MCF 10A (cell line): ENCODE measurements at regions of chr1 and their contacts with region 1.

Region 1: GRCh38 chr1:186985889-186986491 is 157.2 kb downstream of the PLA2G4A start:
- DNase-seq: peak; percentile 80
- H3K4me3 Mint-ChIP-seq: no peak overlapping the region
- H3K27ac Mint-ChIP-seq: no peak overlapping the region
- H3K4me1 Mint-ChIP-seq: no peaks in the 10 kb centered on the region
- H3K27me3 Mint-ChIP-seq: no peaks in the 10 kb centered on the region
- CTCF ChIP-seq: peak; percentile 90

Region 2: DNA sequence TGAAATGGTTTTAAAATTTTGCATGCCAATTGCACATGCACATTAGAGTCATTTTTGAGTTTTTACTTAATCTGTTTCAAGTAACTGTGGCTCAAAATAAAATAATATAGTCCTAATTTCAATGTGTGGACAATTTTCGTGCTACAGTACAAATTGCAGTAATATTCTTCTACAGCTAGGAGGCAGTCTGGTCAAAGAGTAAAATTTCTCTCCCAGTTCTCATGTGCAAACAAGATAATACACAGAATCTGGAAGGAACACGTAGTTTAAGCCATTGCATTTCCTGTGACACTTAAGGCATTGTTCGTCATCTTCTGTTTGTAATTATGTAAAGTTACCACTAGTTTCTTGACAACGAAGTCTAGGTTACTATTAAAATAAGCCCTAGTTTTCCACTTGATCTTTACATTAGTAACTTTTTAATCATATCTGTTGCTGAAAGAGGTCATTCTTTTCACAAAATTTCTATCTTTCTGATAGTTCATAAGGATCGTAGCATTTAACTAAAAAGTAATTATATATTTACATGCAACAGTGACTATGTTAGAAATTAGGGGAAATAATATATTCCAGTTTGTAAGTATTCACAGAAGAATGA is 581.4 kb before region 1 on chr1:
- CTCF ChIA-PET with region 1: interaction called, 5 read pairs
- POLR2A ChIA-PET with region 1: no interaction called
- intact Hi-C with region 1: loop called (anchors 1 kb)
- DNase-seq: peak; percentile 71
- H3K4me3 Mint-ChIP-seq: no peak overlapping the region
- H3K27ac Mint-ChIP-seq: no peak overlapping the region
- H3K4me1 Mint-ChIP-seq: no peaks in the 10 kb centered on the region
- H3K27me3 Mint-ChIP-seq: no peaks in the 10 kb centered on the region
- CTCF ChIP-seq: peak; percentile 78

Region 3: DNA sequence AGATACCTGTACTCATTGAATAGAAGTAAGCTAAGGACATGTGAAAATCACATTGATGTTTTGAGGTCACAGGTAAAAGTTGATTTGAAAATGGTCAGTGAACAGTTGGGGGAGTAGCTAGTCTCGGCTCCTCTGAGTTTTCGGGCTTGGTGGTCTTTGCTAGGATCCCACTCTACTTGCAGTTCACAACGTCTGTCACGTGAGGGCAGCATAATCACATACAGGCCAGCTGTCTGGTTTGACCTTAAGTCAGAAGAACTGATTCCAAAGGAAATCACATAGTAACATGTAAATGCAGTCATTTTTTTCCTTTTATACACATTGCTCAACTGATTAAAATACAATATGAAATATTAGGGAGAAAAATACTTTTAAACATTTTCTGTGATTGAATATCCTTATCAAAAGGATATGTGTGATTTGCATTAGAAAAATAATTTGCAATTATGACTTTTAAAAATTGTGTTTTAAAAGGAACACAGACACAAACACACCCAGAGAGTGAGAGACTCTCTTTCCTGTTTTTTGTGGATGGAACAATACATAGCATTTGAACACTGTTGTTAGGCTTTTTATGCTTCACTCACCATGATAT is 503.2 kb before region 1 on chr1:
- CTCF ChIA-PET with region 1: interaction called, 13 read pairs
- POLR2A ChIA-PET with region 1: interaction called, 4 read pairs
- intact Hi-C with region 1: loop called (anchors 1 kb)
- DNase-seq: peak; percentile 80
- H3K4me3 Mint-ChIP-seq: no peak overlapping the region
- H3K27ac Mint-ChIP-seq: no peak overlapping the region
- H3K4me1 Mint-ChIP-seq: peaks cover 7% of the 10 kb centered on the region
- H3K27me3 Mint-ChIP-seq: no peaks in the 10 kb centered on the region
- CTCF ChIP-seq: peak; percentile 99

Region 4: GRCh38 chr1:186618401-186619170 is 367.4 kb before region 1 on chr1:
- CTCF ChIA-PET with region 1: interaction called, 10 read pairs
- POLR2A ChIA-PET with region 1: interaction called, 4 read pairs
- intact Hi-C with region 1: no loop called
- DNase-seq: peak; percentile 74
- H3K4me3 Mint-ChIP-seq: peak overlapping the region; percentile 56
- H3K27ac Mint-ChIP-seq: peak overlapping the region; percentile 46
- H3K4me1 Mint-ChIP-seq: peaks cover 15% of the 10 kb centered on the region
- H3K27me3 Mint-ChIP-seq: no peaks in the 10 kb centered on the region
- CTCF ChIP-seq: no peak

Region 5: DNA sequence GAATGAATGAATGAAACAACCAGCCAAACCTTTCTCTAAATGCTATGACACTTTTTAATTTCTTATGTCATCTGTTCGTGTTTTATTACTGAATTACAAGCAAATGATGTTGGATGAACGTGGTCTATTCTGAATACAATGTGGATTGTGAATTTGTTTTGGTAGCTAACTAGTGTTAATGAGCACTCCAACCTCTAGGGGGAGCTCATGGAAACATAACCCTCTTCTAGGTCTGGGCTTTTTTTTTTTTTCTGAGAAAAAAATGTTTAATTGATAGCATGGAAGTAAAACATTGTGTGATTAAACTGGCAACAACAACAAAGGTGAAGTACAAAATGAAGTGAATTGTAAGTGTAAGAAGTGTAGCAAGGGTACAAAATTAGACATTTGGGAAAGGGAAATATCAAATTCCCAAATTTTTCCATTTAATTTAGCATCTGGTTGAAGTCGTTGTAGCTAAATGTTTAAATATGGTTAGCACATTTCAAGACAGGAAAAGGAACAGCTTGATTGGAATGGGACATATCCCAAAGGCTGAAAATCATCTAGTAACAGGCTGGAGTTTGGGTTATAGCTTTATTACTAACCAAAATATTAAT is 263.2 kb before region 1 on chr1:
- CTCF ChIA-PET with region 1: interaction called, 17 read pairs
- POLR2A ChIA-PET with region 1: no interaction called
- intact Hi-C with region 1: loop called (anchors 1 kb)
- DNase-seq: peak; percentile 81
- H3K4me3 Mint-ChIP-seq: no peak overlapping the region
- H3K27ac Mint-ChIP-seq: no peak overlapping the region
- H3K4me1 Mint-ChIP-seq: no peaks in the 10 kb centered on the region
- H3K27me3 Mint-ChIP-seq: no peaks in the 10 kb centered on the region
- CTCF ChIP-seq: peak; percentile 67

Region 6: DNA sequence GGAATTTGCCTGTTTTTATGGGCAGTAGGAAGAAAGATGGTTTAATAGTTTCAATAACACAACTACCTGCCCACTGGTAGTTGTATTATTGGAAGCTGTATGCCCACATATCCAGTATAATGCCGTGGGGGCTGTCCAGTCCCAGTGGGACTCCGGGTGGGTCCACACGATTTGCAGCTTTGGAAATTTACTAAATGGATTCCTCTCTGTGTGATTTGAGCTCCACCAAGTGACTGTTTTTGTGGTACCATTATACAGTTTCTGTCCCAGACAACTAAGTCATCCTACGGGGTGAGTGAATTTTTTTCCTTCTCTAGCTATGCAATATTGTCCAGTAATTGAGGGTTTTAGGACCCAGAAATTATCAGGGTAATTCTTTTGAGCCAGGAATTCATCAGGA is 70.4 kb before region 1 on chr1:
- CTCF ChIA-PET with region 1: interaction called, 31 read pairs
- POLR2A ChIA-PET with region 1: interaction called, 4 read pairs
- intact Hi-C with region 1: loop called (anchors 1 kb)
- DNase-seq: no peak
- H3K4me3 Mint-ChIP-seq: no peak overlapping the region
- H3K27ac Mint-ChIP-seq: no peak overlapping the region
- H3K4me1 Mint-ChIP-seq: peaks cover 5% of the 10 kb centered on the region
- H3K27me3 Mint-ChIP-seq: no peaks in the 10 kb centered on the region
- CTCF ChIP-seq: no peak

Region 7: GRCh38 chr1:187010571-187011310 is 24.8 kb after region 1 on chr1:
- CTCF ChIA-PET with region 1: interaction called, 11 read pairs
- POLR2A ChIA-PET with region 1: no interaction called
- intact Hi-C with region 1: no loop called
- DNase-seq: peak; percentile 11
- H3K4me3 Mint-ChIP-seq: no peak overlapping the region
- H3K27ac Mint-ChIP-seq: no peak overlapping the region
- H3K4me1 Mint-ChIP-seq: no peaks in the 10 kb centered on the region
- H3K27me3 Mint-ChIP-seq: no peaks in the 10 kb centered on the region
- CTCF ChIP-seq: no peak

Region 8: GRCh38 chr1:187103354-187103753 is 117.4 kb after region 1 on chr1:
- CTCF ChIA-PET with region 1: no interaction called
- POLR2A ChIA-PET with region 1: no interaction called
- intact Hi-C with region 1: no loop called
- DNase-seq: no peak
- H3K4me3 Mint-ChIP-seq: no peak overlapping the region
- H3K27ac Mint-ChIP-seq: no peak overlapping the region
- H3K4me1 Mint-ChIP-seq: no peaks in the 10 kb centered on the region
- H3K27me3 Mint-ChIP-seq: no peaks in the 10 kb centered on the region
- CTCF ChIP-seq: no peak